ENCODE measurements at regions of chr1 and their contacts with region 1.

Region 1: GRCh38 chr1:66242646-66243547 is 291.1 kb upstream of the SGIP1 start:
- DNase-seq: peak; percentile 86
- H3K4me3 ChIP-seq: no peak overlapping the region
- H3K27ac ChIP-seq: no peak overlapping the region
- H3K4me1 ChIP-seq: no peaks in the 10 kb centered on the region
- H3K27me3 ChIP-seq: no peaks in the 10 kb centered on the region
- CTCF ChIP-seq: peak; percentile 96 to 99 (median 98)
- EP300 ChIP-seq: no peak
- POLR2A ChIP-seq: no peak

Region 2: GRCh38 chr1:65235867-65236805 is 1006.8 kb before region 1 on chr1:
- in situ Hi-C with region 1: loop called in 1 of 4 experiments (anchors 25 kb)
- intact Hi-C with region 1: no loop called
- DNase-seq: no peak
- H3K4me3 ChIP-seq: no peak overlapping the region
- H3K27ac ChIP-seq: no peak overlapping the region
- H3K4me1 ChIP-seq: no peaks in the 10 kb centered on the region
- H3K27me3 ChIP-seq: no peaks in the 10 kb centered on the region
- CTCF ChIP-seq: peak; percentile 40 to 64 (median 44)
- EP300 ChIP-seq: no peak
- POLR2A ChIP-seq: no peak

Region 3: DNA sequence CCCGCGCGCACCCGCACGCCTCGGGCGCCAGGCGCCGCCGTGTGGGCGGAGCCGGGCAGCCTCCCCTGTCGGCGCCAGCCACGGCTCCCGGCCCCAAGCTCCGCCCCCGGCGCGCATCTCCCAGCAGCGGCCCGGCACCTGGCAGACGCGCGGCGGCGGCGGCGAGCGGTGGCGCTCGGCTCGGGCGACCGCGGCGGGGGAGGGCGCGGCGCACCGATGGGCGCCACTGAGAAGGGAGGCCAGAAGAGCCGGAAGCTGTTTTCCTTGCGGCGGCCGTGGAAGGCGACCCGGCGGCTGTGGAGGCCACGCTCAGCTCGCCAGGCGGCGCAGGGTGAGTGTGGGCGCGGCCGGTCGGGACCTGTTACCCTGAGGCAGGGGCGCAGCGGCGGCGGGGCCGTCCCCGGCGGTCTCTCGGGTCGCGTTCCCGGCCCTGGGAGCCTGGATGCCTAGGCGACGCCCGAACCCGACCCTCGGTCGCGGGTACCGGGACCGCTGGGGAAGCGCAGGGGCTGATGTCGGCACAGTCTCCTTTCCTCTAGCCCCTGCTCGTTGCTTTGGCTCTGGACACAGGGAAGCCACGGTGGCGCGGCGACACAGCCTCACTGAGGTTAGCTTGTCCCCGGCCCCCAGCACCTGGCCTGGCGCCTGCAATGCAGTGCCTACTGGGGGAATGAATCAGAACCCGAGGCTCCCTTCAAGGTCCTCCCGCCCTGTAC is 988.4 kb before region 1 on chr1:
- in situ Hi-C with region 1: loop called in 2 of 4 experiments (anchors 25 kb)
- intact Hi-C with region 1: no loop called
- DNase-seq: peak; percentile 87
- H3K4me3 ChIP-seq: peak overlapping the region; percentile 67 to 83 (median 76)
- H3K27ac ChIP-seq: peak overlapping the region; percentile 44 to 73 (median 62)
- H3K4me1 ChIP-seq: peaks cover 0 to 17% (median 14%) of the 10 kb centered on the region in 4 donors
- H3K27me3 ChIP-seq: peaks cover 9% of the 10 kb centered on the region
- CTCF ChIP-seq: peak in 1 of 5 experiments; percentile 3
- EP300 ChIP-seq: no peak
- POLR2A ChIP-seq: no peak

Region 4: GRCh38 chr1:65717815-65718454 is 525.0 kb before region 1 on chr1:
- in situ Hi-C with region 1: loop called in 3 of 4 experiments (anchors 25 kb)
- intact Hi-C with region 1: no loop called
- DNase-seq: no peak
- H3K4me3 ChIP-seq: no peak overlapping the region
- H3K27ac ChIP-seq: no peak overlapping the region
- H3K4me1 ChIP-seq: no peaks in the 10 kb centered on the region
- H3K27me3 ChIP-seq: no peaks in the 10 kb centered on the region
- CTCF ChIP-seq: peak in 1 of 5 experiments; percentile 9
- EP300 ChIP-seq: no peak
- POLR2A ChIP-seq: no peak

Region 5: DNA sequence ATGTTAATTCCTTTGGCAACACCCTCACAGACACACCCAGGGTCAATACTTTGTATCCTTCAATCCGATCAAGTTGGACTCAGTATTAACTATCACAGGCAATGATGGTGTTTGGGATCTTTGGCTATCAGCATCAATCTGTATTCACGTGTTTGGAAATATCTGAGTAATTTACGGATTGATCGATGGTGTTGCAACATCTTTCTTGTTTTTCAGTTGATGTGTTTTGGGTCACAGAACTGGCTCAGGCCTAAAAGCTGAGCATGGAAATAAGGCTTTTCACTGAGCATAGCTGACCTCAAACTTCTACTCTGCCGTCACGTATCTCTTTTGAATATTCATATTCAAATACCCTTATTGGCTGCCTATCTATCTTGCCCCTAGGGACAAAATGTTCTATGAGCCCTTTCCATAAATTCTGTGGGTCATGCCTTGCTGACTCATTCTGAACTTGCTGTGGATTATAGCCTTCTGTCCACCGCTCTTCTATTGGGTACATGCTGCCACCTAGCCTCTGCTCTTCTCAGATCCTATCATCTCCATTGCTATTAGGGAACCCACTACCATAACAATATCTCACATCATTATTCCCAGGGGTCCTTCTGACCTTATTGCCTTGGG is 294.2 kb before region 1 on chr1:
- in situ Hi-C with region 1: loop called in 1 of 4 experiments (anchors 5 kb)
- intact Hi-C with region 1: no loop called
- DNase-seq: peak; percentile 14
- H3K4me3 ChIP-seq: no peak overlapping the region
- H3K27ac ChIP-seq: peak overlapping the region; percentile 27 to 65 (median 58)
- H3K4me1 ChIP-seq: peaks cover 0 to 14% (median 6%) of the 10 kb centered on the region in 4 donors
- H3K27me3 ChIP-seq: no peaks in the 10 kb centered on the region
- CTCF ChIP-seq: peak in 1 of 5 experiments; percentile 24
- EP300 ChIP-seq: no peak
- POLR2A ChIP-seq: no peak

Region 6: GRCh38 chr1:65958561-65959350 is 284.1 kb before region 1 on chr1:
- in situ Hi-C with region 1: loop called (anchors 5 kb)
- intact Hi-C with region 1: loop called (anchors 2 kb)
- DNase-seq: no peak
- H3K4me3 ChIP-seq: no peak overlapping the region
- H3K27ac ChIP-seq: no peak overlapping the region
- H3K4me1 ChIP-seq: peaks cover 0 to 30% (median 13%) of the 10 kb centered on the region in 4 donors
- H3K27me3 ChIP-seq: no peaks in the 10 kb centered on the region
- CTCF ChIP-seq: peak; percentile 67 to 82 (median 76)
- EP300 ChIP-seq: no peak
- POLR2A ChIP-seq: no peak

Region 7: DNA sequence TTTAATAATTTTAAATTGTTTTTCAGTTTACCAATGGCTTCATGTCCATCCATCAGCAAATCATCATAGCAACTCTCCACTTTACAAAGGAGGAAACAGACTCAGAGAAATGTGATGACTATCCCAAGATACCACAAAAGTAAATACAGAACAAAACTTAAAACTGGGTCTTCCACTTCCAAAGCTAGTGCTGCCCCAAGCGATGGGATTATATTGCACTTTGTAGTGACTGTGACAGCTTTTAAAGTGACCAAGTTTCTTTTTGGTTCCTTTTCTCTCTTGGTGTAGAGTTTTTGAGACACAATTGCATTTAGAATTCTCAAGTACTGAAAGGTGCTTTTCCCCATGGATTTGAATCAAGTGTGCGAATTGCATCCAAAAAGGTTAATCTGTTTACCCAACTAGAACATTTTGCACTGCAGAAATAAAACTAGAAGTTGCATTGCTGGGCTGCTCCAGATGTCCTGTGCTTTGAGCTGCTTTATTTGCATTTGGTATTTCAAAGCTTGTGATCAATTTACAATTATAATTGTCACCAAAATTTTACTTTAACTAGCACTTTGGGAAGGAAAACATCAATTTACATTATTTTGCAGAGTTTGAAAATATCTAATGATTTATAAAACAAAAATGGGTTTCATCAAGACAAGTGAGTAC is 130.0 kb before region 1 on chr1:
- in situ Hi-C with region 1: no loop called
- intact Hi-C with region 1: no loop called
- DNase-seq: no peak
- H3K4me3 ChIP-seq: no peak overlapping the region
- H3K27ac ChIP-seq: no peak overlapping the region
- H3K4me1 ChIP-seq: no peaks in the 10 kb centered on the region
- H3K27me3 ChIP-seq: no peaks in the 10 kb centered on the region
- CTCF ChIP-seq: no peak
- EP300 ChIP-seq: no peak
- POLR2A ChIP-seq: no peak

Region 8: GRCh38 chr1:66725885-66726665 is 483.2 kb after region 1 on chr1:
- in situ Hi-C with region 1: loop called in 1 of 4 experiments (anchors 25 kb)
- intact Hi-C with region 1: no loop called
- DNase-seq: peak; percentile 21
- H3K4me3 ChIP-seq: no peak overlapping the region
- H3K27ac ChIP-seq: no peak overlapping the region
- H3K4me1 ChIP-seq: peaks cover 0 to 6% (median 0%) of the 10 kb centered on the region in 4 donors
- H3K27me3 ChIP-seq: no peaks in the 10 kb centered on the region
- CTCF ChIP-seq: peak; percentile 61 to 93 (median 90)
- EP300 ChIP-seq: no peak
- POLR2A ChIP-seq: no peak